Left ventricle myocardium superior (tissue), 1 donor: ENCODE measurements at regions of chr11 and their contacts with region 1.

Region 1: GRCh38 chr11:13335319-13335718 is 57.7 kb downstream of the BMAL1 start:
- DNase-seq: peak; percentile 62
- ATAC-seq: peak; percentile 48

Region 2: GRCh38 chr11:13276832-13277767 is 58.2 kb before region 1 on chr11:
- intact Hi-C with region 1: loop called (anchors 10 kb)
- DNase-seq: peak; percentile 99
- ATAC-seq: peak; percentile 97